ENCODE measurements at regions of chr2 and their contacts with region 1.

Region 1: GRCh38 chr2:231411831-231412617 is 16.5 kb downstream of the B3GNT7 start:
- DNase-seq: peak; percentile 10 to 63 (median 40)
- ATAC-seq: peak; percentile 97
- H3K4me3 ChIP-seq: peak overlapping the region; percentile 20
- H3K4me3 Mint-ChIP-seq: peak overlapping the region; percentile 44 to 73 (median 66)
- H3K27ac ChIP-seq: no peak overlapping the region
- H3K27ac Mint-ChIP-seq: no peak overlapping the region
- H3K4me1 ChIP-seq: peaks cover 0 to 9% of the 10 kb centered on the region in 2 donors
- H3K4me1 Mint-ChIP-seq: peaks cover under 1 to 8% (median 5%) of the 10 kb centered on the region in 7 donors
- H3K27me3 ChIP-seq: peaks cover 4 to 8% of the 10 kb centered on the region in 2 donors
- H3K27me3 Mint-ChIP-seq: peaks cover 17 to 48% (median 32%) of the 10 kb centered on the region in 5 donors

Region 2: GRCh38 chr2:231104115-231104713 is 307.8 kb before region 1 on chr2:
- CTCF ChIA-PET with region 1: no interaction called
- POLR2A ChIA-PET with region 1: no interaction called
- intact Hi-C with region 1: loop called (anchors 1 to 5 kb)
- DNase-seq: peak in 8 of 9 donors; percentile 10 to 58 (median 40)
- ATAC-seq: peak; percentile 84
- H3K4me3 ChIP-seq: no peak overlapping the region
- H3K4me3 Mint-ChIP-seq: no peak overlapping the region
- H3K27ac ChIP-seq: no peak overlapping the region
- H3K27ac Mint-ChIP-seq: peak overlapping the region in 2 of 9 donors; percentile 10 to 12
- H3K4me1 ChIP-seq: no peaks in the 10 kb centered on the region
- H3K4me1 Mint-ChIP-seq: peaks cover 0 to 6% (median 5%) of the 10 kb centered on the region in 7 donors
- H3K27me3 ChIP-seq: no peaks in the 10 kb centered on the region
- H3K27me3 Mint-ChIP-seq: no peaks in the 10 kb centered on the region

Region 3: DNA sequence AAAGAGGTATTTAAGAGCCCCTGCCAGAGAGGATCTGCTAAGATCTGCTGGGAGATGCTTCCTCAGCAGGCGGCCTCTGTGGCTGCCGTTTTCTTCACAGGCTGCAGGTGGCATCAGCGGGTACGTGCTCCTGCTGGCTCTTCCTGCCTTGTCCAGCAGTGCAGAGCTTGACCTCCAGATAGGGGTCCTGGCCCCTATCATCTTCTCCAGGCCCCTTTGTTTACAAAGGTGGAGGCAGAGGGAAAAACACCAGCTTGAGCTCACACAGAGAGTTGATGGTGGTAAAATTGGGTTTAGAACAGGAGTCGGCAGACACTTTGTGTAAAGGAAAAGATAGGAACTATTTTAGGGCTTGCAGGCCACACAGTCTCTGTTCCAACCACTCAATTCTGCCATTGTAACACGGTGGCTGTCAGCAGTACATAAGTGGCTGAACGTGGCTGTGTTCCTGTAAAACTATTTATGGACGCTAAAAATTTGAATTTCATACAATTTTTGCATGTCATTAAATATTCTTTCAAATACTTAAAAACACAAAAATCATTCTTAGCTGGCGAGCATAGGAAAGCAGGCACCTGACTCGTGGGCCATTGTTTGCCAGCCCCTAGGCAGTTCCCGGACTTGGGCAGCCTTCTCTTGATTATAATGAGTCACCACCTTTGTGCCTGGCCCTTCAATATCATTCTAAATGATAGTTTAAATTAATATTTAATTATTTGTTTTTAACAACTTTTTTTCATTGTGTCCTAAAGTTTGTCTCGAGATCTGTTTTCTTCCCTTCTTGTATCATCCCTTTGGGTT is 114.7 kb before region 1 on chr2:
- CTCF ChIA-PET with region 1: no interaction called
- POLR2A ChIA-PET with region 1: no interaction called
- intact Hi-C with region 1: loop called in 1 of 2 experiments (anchors 5 kb)
- DNase-seq: no peak
- ATAC-seq: peak; percentile 55
- H3K4me3 ChIP-seq: no peak overlapping the region
- H3K4me3 Mint-ChIP-seq: no peak overlapping the region
- H3K27ac ChIP-seq: no peak overlapping the region
- H3K27ac Mint-ChIP-seq: no peak overlapping the region
- H3K4me1 ChIP-seq: no peaks in the 10 kb centered on the region
- H3K4me1 Mint-ChIP-seq: peaks cover 0 to 8% (median 0%) of the 10 kb centered on the region in 7 donors
- H3K27me3 ChIP-seq: no peaks in the 10 kb centered on the region
- H3K27me3 Mint-ChIP-seq: peaks cover 0 to 11% (median 0%) of the 10 kb centered on the region in 5 donors

Measured in naive thymus-derived CD4-positive, alpha-beta T cell (primary cell).